ENCODE measurements at regions of chr10 and their contacts with region 1.

Region 1: GRCh38 chr10:22630234-22631174 is 83.9 kb downstream of the PIP4K2A start:
- DNase-seq: peak; percentile 33 to 77 (median 58)
- ATAC-seq: peak; percentile 82
- H3K4me3 ChIP-seq: peak overlapping the region; percentile 3; the same call in 1 of the 2 replicates
- H3K27ac ChIP-seq: peak overlapping the region; percentile 89
- H3K4me1 ChIP-seq: peaks cover 2 to 55% of the 10 kb centered on the region in 2 experiments; a peak in 4 of 5 replicates
- H3K27me3 ChIP-seq: no peaks in the 10 kb centered on the region
- CTCF ChIP-seq: no peak
- EP300 ChIP-seq: peak; percentile 64
- POLR2A ChIP-seq: no peak; the same call in 1 of the 2 replicates
- RAD21 ChIP-seq: no peak

Region 2: DNA sequence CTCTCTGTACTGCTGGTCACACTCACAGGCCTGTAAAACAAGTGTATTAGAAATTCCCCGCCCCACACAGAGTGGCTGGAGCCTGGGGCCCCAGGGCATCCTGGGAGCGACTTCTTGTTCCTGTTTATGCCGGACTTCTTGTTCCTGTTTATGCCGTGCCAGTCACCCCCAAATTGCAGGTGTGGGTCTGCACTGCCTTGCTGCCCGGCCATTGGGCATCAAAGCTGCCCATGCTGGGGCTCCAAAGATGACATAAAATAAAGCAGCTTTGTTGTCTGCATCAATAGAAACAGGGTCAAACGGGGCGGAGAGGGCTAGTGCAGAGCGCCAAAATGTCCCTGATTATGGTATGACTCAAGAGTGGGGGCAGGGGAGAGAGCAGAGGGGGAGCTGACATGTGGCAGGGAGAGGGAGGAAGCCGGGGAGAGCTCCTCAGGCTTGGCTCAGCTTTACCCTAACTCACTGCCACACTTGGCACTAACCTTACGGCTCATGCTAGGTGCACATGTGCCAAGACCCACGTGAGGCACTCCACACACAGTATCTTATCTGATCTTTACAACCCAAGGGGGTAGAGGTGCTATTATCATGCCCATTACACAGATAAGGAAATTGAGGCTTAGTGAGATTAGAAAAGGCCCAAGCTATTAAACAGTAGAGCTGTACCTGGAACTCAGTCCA is 14.5 kb before region 1 on chr10:
- CTCF ChIA-PET with region 1: no interaction called
- POLR2A ChIA-PET with region 1: interaction called, 23 read pairs
- in situ Hi-C with region 1: no loop called
- intact Hi-C with region 1: no loop called
- DNase-seq: peak; percentile 70 to 86 (median 74)
- ATAC-seq: peak; percentile 97
- H3K4me3 ChIP-seq: peak overlapping the region; percentile 49
- H3K27ac ChIP-seq: peak overlapping the region; percentile 95
- H3K4me1 ChIP-seq: peaks cover 17 to 41% of the 10 kb centered on the region in 2 experiments
- H3K27me3 ChIP-seq: no peaks in the 10 kb centered on the region
- CTCF ChIP-seq: no peak
- EP300 ChIP-seq: no peak; the same call in 1 of the 2 replicates
- POLR2A ChIP-seq: peak; percentile 71
- RAD21 ChIP-seq: no peak; a peak in 1 of 4 replicates

Region 3: DNA sequence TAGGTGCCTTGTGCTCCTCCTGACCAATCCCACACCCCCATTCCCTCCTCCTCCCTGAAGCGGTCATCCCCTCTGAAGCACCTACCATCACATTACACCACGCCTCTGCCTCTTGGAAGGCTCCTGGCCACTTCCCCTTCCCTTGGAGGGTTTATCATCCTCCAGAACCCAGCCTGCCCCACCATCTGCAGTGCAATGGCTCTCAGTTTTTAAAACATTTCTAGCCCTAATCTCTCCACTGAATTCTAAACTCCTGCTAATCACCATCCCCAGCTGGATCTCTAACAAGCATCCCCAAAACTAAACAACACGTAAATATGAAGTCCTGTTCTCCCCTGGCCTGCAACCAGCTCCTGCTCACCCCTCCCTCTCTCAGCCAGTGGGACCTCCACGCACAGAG is 13.3 kb after region 1 on chr10:
- CTCF ChIA-PET with region 1: no interaction called
- POLR2A ChIA-PET with region 1: interaction called, 20 read pairs
- in situ Hi-C with region 1: no loop called
- intact Hi-C with region 1: no loop called
- DNase-seq: peak in 2 of 4 experiments; percentile 36 to 72
- ATAC-seq: peak; percentile 83
- H3K4me3 ChIP-seq: no peak overlapping the region
- H3K27ac ChIP-seq: peak overlapping the region; percentile 52; the same call in 2 of the 3 replicates
- H3K4me1 ChIP-seq: peaks cover 10 to 44% of the 10 kb centered on the region in 2 experiments
- H3K27me3 ChIP-seq: no peaks in the 10 kb centered on the region
- CTCF ChIP-seq: peak in 1 of 3 experiments; percentile 11; a peak in 1 of 6 replicates
- EP300 ChIP-seq: no peak; the same call in 1 of the 2 replicates
- POLR2A ChIP-seq: no peak
- RAD21 ChIP-seq: no peak

Region 4: DNA sequence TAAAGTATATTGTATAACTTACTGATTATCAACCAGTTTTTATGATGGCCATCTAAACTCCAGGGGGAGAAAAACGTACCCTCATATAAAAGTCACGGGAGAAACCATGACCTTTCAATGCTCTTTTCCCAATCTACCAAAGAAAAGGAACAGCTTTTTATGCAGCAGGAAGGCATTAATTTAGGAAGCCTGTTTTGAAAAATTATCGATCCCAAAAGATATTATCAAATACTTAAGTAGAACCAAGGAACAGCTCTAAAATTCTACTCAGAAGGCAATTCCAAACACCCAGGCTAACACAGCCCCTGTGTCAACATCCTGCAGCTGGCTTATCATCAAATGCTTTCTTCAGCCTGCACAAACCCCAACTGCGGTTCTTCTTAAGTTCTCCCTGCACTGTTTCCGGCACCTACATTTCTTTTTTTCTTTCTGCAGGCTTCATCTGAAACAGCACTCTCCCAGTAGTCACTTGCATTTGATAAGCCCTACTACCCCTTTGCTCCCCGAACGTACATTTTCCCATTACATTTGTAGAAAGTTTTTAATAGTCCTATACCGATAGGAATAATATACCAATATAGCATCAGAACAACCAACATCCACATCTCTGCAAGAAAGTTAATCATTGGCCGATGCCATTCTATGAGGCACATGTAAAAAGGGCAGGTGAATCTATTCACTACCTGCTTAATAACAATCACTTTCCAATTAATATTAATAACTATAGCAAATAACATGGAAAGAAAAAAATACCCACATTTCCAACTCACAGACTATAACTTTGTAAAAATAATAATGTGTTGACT is 36.0 kb after region 1 on chr10:
- CTCF ChIA-PET with region 1: no interaction called
- POLR2A ChIA-PET with region 1: interaction called, 4 read pairs
- in situ Hi-C with region 1: no loop called
- intact Hi-C with region 1: loop called (anchors 5 kb)
- DNase-seq: peak in 3 of 4 experiments; percentile 25 to 86 (median 72)
- ATAC-seq: peak; percentile 85
- H3K4me3 ChIP-seq: peak overlapping the region; percentile 7; the same call in 1 of the 2 replicates
- H3K27ac ChIP-seq: peak overlapping the region; percentile 78; the same call in 2 of the 3 replicates
- H3K4me1 ChIP-seq: peaks cover 23 to 55% of the 10 kb centered on the region in 2 experiments
- H3K27me3 ChIP-seq: no peaks in the 10 kb centered on the region
- CTCF ChIP-seq: no peak
- EP300 ChIP-seq: peak; percentile 69; the same call in 1 of the 2 replicates
- POLR2A ChIP-seq: no peak
- RAD21 ChIP-seq: peak in 1 of 2 experiments; percentile 25; a peak in 1 of 4 replicates

Region 5: GRCh38 chr10:22714479-22715289 is 84.2 kb after region 1 on chr10 and contains the start of gene PIP4K2A:
- CTCF ChIA-PET with region 1: no interaction called
- POLR2A ChIA-PET with region 1: no interaction called
- in situ Hi-C with region 1: no loop called
- intact Hi-C with region 1: loop called (anchors 5 kb)
- DNase-seq: peak; percentile 86 to 91 (median 88)
- ATAC-seq: peak; percentile 72
- H3K4me3 ChIP-seq: peak within 1 kb of the TSS; percentile 85
- H3K27ac ChIP-seq: peak within 1 kb of the TSS; percentile 93
- H3K4me1 ChIP-seq: peaks cover 19 to 23% of the 10 kb centered on the region in 2 experiments; a peak in 4 of 5 replicates
- H3K27me3 ChIP-seq: no peaks in the 10 kb centered on the region
- CTCF ChIP-seq: no peak
- EP300 ChIP-seq: no peak
- POLR2A ChIP-seq: no peak; the same call in 1 of the 2 replicates
- RAD21 ChIP-seq: 0 out of 4 replicates have a peak, but pooled peaks of 1 of the 2 experiments have one; percentile 13
- polyA plus RNA-seq, gene PIP4K2A: 64.8 to 87.2 TPM

Region 6: GRCh38 chr10:23053036-23053435 is 422.5 kb after region 1 on chr10:
- CTCF ChIA-PET with region 1: no interaction called
- POLR2A ChIA-PET with region 1: interaction called, 10 read pairs
- in situ Hi-C with region 1: no loop called
- intact Hi-C with region 1: no loop called
- DNase-seq: peak in 1 of 4 experiments; percentile 68
- ATAC-seq: no peak; the same call in 2 of the 3 replicates
- H3K4me3 ChIP-seq: no peak overlapping the region
- H3K27ac ChIP-seq: peak overlapping the region; percentile 82
- H3K4me1 ChIP-seq: peaks cover 12 to 61% of the 10 kb centered on the region in 2 experiments
- H3K27me3 ChIP-seq: no peaks in the 10 kb centered on the region
- CTCF ChIP-seq: no peak
- EP300 ChIP-seq: peak; percentile 26; the same call in 1 of the 2 replicates
- POLR2A ChIP-seq: no peak
- RAD21 ChIP-seq: no peak